ENCODE measurements at regions of chr3 and their contacts with region 1.

Region 1: GRCh38 chr3:156816800-156817645 is 9.1 kb upstream of the LEKR1 start:
- DNase-seq: peak; percentile 75 to 87 (median 77)
- H3K4me3 ChIP-seq: peak overlapping the region; percentile 44
- H3K27ac ChIP-seq: peak overlapping the region; percentile 62 to 66
- H3K4me1 ChIP-seq: no peaks in the 10 kb centered on the region
- H3K27me3 ChIP-seq: no peaks in the 10 kb centered on the region
- CTCF ChIP-seq: no peak
- EP300 ChIP-seq: peak; percentile 56
- POLR2A ChIP-seq: no peak

Region 2: DNA sequence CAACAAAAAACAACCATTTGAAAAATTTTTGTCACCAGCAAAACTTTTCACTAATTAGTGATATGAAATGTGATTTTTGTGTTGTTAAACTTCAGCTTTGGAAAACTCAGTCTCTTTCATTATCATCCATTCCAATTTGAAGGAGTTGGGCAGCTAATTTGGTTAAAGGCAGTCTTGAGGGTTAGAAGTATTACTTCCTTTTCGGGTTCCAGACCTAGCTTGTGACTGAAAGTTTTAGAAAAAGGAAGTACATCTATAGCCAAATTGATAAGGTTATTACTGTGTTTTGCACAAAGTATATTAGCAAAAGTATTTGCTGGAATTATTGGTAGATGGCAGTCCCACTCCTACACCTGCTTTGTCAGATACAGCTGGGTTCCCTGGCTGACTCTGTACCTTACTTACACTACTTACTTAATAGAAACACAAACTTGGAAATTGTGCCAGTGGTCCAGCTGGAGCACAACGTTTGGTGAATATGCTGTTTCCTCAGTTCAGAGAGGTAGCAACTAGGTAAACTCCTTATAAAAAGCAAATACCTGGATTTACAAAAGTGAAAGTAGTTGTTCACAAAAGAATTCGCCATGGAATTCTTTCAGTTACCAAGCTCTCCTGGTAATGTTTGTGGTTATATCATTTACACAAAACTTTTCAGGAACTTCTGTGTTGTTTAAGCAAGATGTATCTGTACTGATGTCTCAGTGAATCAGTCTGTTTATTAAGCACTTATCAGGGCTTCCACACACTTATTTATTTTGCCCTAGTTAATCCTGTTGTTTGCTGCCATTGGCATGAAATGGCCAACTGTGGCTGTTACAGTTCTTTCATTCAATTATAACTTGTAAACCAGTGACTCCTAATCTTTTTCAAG is 111.0 kb before region 1 on chr3:
- intact Hi-C with region 1: loop called in 1 of 4 experiments (anchors 10 kb)
- DNase-seq: no peak
- H3K4me3 ChIP-seq: no peak overlapping the region
- H3K27ac ChIP-seq: no peak overlapping the region
- H3K4me1 ChIP-seq: no peaks in the 10 kb centered on the region
- H3K27me3 ChIP-seq: no peaks in the 10 kb centered on the region
- CTCF ChIP-seq: no peak
- EP300 ChIP-seq: no peak
- POLR2A ChIP-seq: no peak

Region 3: DNA sequence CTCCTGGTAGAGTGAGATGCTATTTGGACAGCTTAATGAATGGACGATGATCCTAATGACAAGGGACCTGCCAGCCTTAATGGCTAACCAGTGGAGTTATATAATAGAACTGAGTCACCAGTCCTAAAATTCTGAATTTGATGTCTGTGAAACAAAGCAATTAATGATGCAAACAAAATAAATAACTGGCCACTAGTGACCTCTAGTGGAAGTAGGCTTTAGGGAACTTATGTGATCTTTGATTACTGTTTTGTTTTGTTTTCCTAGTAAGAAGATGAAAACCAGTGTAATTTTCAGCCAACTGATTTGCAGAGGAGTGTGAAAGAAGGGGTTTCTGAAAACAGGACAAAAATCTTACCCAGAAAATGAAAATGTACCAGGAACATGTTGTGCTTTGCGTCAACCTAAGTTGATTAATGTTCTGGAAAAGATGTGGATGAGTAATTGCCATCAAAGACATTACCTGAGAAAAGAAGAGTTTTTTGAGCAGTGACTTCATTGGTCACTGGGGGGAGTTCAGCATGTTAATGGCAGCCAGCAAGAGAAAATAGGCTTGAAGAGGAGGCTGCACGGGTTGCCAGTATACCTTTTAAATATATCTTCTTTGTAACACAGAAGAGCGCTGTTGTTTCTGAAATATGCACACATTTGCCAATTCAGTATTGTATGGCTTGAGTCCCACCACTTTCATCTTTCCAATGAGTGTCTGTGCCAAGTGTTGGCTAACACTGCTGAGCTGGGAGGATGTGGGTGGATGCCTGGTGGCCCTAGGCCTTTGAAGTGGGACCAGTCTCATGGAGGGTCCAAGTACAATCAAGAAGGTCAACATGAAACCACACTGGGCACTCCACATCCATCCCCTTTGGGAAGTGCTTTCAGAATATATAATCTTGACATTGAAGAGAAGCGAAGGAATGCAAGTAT is 676.9 kb after region 1 on chr3:
- intact Hi-C with region 1: loop called in 1 of 4 experiments (anchors 5 kb)
- DNase-seq: no peak
- H3K4me3 ChIP-seq: no peak overlapping the region
- H3K27ac ChIP-seq: no peak overlapping the region
- H3K4me1 ChIP-seq: no peaks in the 10 kb centered on the region
- H3K27me3 ChIP-seq: no peaks in the 10 kb centered on the region
- CTCF ChIP-seq: no peak
- EP300 ChIP-seq: no peak
- POLR2A ChIP-seq: no peak

Region 4: DNA sequence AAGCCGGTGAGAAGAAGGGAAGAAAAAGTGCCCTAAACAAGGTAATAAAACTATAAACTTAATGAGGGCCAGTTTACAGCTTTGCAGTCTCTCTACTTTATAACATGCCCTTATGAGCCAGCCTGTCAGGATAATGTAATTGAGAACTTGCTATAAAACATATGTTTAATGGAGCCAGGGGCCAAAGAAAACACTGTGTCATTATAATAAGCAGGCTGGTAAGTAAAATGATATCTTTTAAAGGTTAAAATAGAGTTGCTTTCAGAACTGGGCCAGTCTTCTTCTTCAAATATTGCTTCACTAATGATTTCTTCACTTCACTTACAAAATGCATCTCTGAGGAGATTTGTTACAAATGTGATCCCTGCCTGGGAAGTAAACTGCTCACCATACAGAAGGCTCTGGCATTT is 1096.7 kb after region 1 on chr3:
- intact Hi-C with region 1: no loop called
- DNase-seq: no peak
- H3K4me3 ChIP-seq: no peak overlapping the region
- H3K27ac ChIP-seq: no peak overlapping the region
- H3K4me1 ChIP-seq: no peaks in the 10 kb centered on the region
- H3K27me3 ChIP-seq: no peaks in the 10 kb centered on the region
- CTCF ChIP-seq: no peak
- EP300 ChIP-seq: no peak
- POLR2A ChIP-seq: no peak

Measured in ovary (tissue), 10 donors.